ENCODE measurements at regions of chr15 and their contacts with region 1.

Region 1: DNA sequence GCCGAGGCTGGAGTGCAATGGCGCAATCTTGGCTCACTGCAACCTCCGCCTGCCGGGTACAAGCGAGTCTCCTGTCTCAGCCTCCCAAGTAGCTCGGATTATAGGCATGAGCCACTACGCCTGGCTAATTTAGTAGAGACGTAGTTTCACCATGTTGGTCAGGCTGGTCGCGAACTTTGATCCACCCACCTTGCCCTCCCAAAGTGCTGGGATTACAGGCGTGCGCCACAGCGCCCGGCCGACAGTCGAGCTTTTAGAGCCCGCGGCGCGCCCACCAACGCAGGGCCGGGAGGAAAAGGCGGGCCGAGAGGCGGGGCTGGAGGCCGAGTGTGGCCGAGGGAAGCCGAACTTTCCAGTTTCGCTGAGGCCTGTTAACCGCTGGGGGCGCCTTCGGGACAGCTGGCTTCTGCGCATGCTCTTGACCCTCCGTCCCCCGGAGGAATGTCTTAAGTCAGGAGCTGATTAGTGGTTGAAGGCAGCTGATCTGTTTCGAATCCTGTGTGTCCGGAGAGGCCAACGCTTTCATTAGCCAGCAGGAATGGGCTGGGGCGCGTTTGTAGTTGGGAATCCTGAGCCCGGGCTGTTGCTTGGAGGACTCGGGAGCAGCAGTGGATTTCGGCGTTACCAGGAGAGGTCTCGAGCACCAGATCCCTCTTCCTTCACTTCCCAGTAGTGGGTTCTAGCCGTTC is 10.0 kb downstream of the RPLP1 start:
- DNase-seq: peak; percentile 94
- ATAC-seq: peak; percentile 99
- H3K4me3 ChIP-seq: peak overlapping the region; percentile 70 to 90 (median 86)
- H3K4me3 Mint-ChIP-seq: peak overlapping the region; percentile 88
- H3K27ac ChIP-seq: peak overlapping the region; percentile 57 to 77
- H3K27ac Mint-ChIP-seq: peak overlapping the region; percentile 75
- H3K4me1 ChIP-seq: peaks cover 11 to 16% of the 10 kb centered on the region in 2 donors
- H3K4me1 Mint-ChIP-seq: peaks cover 22% of the 10 kb centered on the region
- H3K27me3 ChIP-seq: no peaks in the 10 kb centered on the region
- H3K27me3 Mint-ChIP-seq: no peaks in the 10 kb centered on the region
- CTCF ChIP-seq: peak; percentile 83

Region 2: GRCh38 chr15:69132977-69133861 is 329.4 kb before region 1 on chr15:
- CTCF ChIA-PET with region 1: no interaction called
- POLR2A ChIA-PET with region 1: no interaction called
- intact Hi-C with region 1: no loop called
- DNase-seq: no peak
- ATAC-seq: no peak
- H3K4me3 ChIP-seq: no peak overlapping the region
- H3K4me3 Mint-ChIP-seq: no peak overlapping the region
- H3K27ac ChIP-seq: no peak overlapping the region
- H3K27ac Mint-ChIP-seq: no peak overlapping the region
- H3K4me1 ChIP-seq: peaks cover 4 to 14% of the 10 kb centered on the region in 2 donors
- H3K4me1 Mint-ChIP-seq: peaks cover 14% of the 10 kb centered on the region
- H3K27me3 ChIP-seq: peaks cover 0 to 4% (median 1%) of the 10 kb centered on the region in 4 experiments
- H3K27me3 Mint-ChIP-seq: peaks cover 18% of the 10 kb centered on the region
- CTCF ChIP-seq: no peak

Region 3: GRCh38 chr15:69413822-69414700 is 48.6 kb before region 1 on chr15 and contains the start of gene KIF23:
- CTCF ChIA-PET with region 1: interaction called, 9 read pairs
- POLR2A ChIA-PET with region 1: no interaction called
- intact Hi-C with region 1: loop called (anchors 1 kb)
- DNase-seq: peak; percentile 94
- ATAC-seq: peak; percentile 96
- H3K4me3 ChIP-seq: peak within 1 kb of the TSS; percentile 58 to 80 (median 70)
- H3K4me3 Mint-ChIP-seq: peak within 1 kb of the TSS; percentile 93
- H3K27ac ChIP-seq: no peak within 1 kb of the TSS
- H3K27ac Mint-ChIP-seq: peak within 1 kb of the TSS; percentile 62
- H3K4me1 ChIP-seq: peaks cover 5 to 9% of the 10 kb centered on the region in 2 donors
- H3K4me1 Mint-ChIP-seq: peaks cover 13% of the 10 kb centered on the region
- H3K27me3 ChIP-seq: peaks cover 0 to 8% (median 2%) of the 10 kb centered on the region in 4 experiments
- H3K27me3 Mint-ChIP-seq: peaks cover 16% of the 10 kb centered on the region
- CTCF ChIP-seq: no peak
- total RNA-seq, gene KIF23: 0.30 and 0.41 TPM in 2 replicates

Region 4: DNA sequence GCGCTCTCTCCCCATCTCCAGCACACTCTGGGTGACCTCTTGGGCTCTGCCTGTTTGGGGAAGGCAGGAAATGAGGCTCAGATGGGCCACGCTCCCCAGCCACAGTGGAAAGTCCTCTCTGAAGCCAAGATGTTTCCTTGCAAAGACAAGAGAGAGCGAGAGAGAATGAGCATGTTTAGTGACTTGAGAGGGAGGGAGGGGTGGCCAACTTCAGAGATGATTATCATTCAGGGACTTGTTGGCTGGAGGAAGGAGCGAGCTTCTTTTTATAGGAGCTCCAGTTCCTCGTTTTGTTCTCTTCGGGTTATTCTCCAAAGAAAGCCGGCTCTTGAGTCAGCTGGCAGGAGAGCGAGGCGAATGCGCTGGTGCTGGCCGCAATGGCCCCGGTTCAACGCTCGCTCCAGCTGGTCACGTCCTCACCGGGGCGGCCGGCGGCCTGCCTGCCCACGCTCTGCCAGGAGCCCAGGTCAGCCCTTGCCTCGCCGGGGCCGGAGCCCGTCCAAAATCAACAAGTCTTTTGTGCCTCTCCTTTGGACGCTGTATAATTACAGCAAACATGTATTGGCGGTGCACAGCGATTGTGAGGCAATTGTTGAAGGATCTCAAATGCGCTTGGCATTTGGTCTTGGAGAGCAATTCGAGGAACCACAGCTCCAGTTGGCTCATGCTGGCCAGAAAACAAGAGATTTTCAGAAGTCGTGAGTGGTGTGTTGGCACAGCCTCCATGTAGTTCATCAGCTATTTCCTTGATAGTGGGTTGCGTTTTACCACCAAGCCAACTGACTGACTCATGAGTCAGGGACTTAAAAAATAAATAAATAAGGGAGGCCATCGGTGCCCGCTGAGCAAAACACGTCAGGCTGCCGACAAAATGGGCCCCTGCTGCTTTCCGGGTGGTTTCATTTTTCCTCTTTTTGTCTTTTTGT is 1012.1 kb after region 1 on chr15:
- CTCF ChIA-PET with region 1: no interaction called
- POLR2A ChIA-PET with region 1: no interaction called
- intact Hi-C with region 1: loop called (anchors 5 kb)
- DNase-seq: peak; percentile 61
- ATAC-seq: peak; percentile 41
- H3K4me3 ChIP-seq: peak overlapping the region; percentile 5 to 58 (median 48)
- H3K4me3 Mint-ChIP-seq: peak overlapping the region; percentile 72
- H3K27ac ChIP-seq: no peak overlapping the region
- H3K27ac Mint-ChIP-seq: peak overlapping the region; percentile 67
- H3K4me1 ChIP-seq: peaks cover 33 to 40% of the 10 kb centered on the region in 2 donors
- H3K4me1 Mint-ChIP-seq: peaks cover 36% of the 10 kb centered on the region
- H3K27me3 ChIP-seq: peaks cover 0 to 19% (median 2%) of the 10 kb centered on the region in 4 experiments
- H3K27me3 Mint-ChIP-seq: no peaks in the 10 kb centered on the region
- CTCF ChIP-seq: no peak